Activated CD4-positive, alpha-beta memory T cell treated with anti-CD3 and anti-CD28 coated beads for 36 hours (primary cell): ENCODE measurements at regions of chr16 and their contacts with region 1.

Region 1: DNA sequence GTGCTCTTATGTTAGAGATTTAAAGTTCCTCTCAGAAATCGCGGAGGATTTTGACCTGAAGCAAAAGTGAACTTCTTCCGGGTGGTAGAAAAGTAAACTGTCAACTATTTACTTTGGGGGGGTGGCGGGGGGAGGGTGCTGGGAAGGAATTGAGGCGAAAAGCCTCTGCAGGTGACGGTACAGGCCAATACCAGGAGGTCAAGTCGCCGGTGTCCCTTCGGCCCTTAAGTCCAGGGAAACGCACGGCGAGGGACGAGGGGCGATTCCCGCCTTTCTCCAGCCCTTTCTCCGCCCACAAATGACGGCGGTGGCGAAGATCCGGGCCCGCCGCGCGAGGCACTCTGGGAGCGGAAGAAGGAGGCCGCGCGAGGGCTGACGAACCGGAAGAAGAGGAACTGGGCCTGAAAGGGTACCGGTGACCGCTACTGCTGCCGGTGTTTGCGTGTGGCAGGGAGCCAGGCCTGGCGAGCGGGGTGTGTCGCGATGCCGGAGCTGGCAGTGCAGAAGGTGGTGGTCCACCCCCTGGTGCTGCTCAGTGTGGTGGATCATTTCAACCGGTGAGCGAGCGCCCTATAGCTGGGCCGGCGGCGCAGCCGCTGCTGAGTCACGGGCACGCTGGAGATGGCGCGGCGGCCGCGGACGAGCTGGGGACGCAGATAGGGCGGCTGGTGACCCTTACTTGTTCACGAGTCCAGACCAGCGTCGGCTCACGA is at the start of gene PSMD7:
- DNase-seq: peak; percentile 94
- H3K4me3 Mint-ChIP-seq: peak within 1 kb of the TSS; percentile 87
- H3K27ac Mint-ChIP-seq: peak within 1 kb of the TSS; percentile 94
- H3K4me1 Mint-ChIP-seq: peaks cover 31% of the 10 kb centered on the region
- H3K27me3 Mint-ChIP-seq: no peaks in the 10 kb centered on the region
- total RNA-seq, gene PSMD7: 119 to 123 TPM

Region 2: DNA sequence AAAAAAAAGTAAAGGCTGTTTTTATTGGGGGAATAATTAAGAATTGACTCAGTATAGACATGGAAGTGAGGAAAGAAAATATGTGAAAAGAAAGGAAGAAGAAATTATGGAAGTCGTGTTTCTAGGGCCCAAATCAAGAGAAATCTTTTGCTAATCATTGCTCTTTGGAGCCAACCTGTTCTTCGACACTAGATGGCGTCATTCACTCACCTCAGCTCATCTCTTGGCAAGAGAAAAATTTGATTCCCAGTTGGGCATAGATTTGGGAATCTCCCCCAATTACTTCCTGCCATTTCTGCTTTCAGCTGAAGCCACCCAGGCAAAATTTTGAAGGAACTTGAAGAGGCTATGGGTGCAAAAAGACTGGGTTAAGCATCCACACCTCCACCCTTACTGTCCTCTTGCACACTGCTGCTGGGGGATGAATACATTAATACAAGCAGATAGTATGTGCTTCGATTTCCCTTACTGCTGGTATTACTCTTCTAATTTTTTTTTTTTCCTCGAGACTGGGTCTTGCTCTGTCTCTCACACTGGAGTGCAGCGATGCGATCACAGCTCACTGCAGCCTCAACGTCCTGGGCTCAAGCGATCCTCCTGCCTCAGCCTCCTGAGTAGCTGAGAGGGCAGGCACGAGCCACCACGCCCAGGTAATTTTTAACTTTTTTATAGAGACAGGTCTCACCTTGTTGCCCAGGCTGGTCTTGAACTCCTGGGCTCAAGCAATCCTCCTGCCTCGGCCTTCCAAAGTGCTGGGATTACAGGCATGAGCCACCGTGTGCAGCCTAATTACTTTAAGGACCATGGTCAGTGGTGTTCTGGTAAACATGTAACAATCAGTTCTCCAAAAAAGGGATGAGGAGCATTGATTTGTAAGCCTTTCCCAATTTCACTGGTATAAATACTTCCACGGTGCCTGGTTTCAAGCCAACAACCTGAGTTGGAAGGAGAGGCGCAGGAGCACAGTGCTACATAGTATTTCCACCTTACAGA is 13.5 kb after region 1 on chr16:
- CTCF ChIA-PET with region 1: interaction called, 29 read pairs
- POLR2A ChIA-PET with region 1: interaction called, 7 read pairs
- intact Hi-C with region 1: no loop called
- DNase-seq: no peak
- H3K4me3 Mint-ChIP-seq: no peak overlapping the region
- H3K27ac Mint-ChIP-seq: no peak overlapping the region
- H3K4me1 Mint-ChIP-seq: peaks cover 7% of the 10 kb centered on the region
- H3K27me3 Mint-ChIP-seq: no peaks in the 10 kb centered on the region

Region 3: GRCh38 chr16:74372953-74373846 is 76.6 kb after region 1 on chr16:
- CTCF ChIA-PET with region 1: no interaction called
- POLR2A ChIA-PET with region 1: interaction called, 3 read pairs
- intact Hi-C with region 1: loop called (anchors 1 kb)
- DNase-seq: no peak
- H3K4me3 Mint-ChIP-seq: no peak overlapping the region
- H3K27ac Mint-ChIP-seq: no peak overlapping the region
- H3K4me1 Mint-ChIP-seq: no peaks in the 10 kb centered on the region
- H3K27me3 Mint-ChIP-seq: no peaks in the 10 kb centered on the region

Region 4: DNA sequence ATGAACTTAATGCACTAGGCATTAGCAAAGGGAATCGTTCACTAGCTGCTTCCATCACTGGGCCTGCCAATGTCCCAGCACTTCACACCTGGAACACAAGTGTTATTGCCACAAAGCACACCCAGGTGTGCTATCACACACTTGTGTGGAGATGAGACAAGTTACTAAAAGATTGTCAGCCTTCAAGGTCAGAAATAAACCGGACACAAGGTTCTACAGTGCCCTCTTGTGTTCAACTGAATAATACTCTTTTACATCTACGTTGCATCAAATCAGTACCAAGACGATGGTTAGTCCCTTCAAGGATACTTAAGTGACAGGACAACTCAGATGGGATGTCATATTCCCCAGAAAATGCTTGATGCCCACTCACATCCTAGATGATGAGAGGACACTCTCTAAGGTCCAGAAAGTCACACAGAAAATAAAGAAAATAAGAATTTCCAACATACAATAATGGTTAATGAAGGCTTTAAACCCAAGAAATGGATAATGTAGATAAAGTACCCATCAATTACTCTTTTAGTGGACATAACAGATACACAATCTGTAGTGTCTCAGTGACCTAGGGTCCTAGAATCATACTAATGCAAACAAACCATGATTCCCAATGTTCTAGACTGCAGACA is 326.7 kb after region 1 on chr16:
- CTCF ChIA-PET with region 1: no interaction called
- POLR2A ChIA-PET with region 1: no interaction called
- intact Hi-C with region 1: loop called (anchors 2 kb)
- DNase-seq: no peak
- H3K4me3 Mint-ChIP-seq: no peak overlapping the region
- H3K27ac Mint-ChIP-seq: no peak overlapping the region
- H3K4me1 Mint-ChIP-seq: peaks cover 38% of the 10 kb centered on the region
- H3K27me3 Mint-ChIP-seq: no peaks in the 10 kb centered on the region

Region 5: DNA sequence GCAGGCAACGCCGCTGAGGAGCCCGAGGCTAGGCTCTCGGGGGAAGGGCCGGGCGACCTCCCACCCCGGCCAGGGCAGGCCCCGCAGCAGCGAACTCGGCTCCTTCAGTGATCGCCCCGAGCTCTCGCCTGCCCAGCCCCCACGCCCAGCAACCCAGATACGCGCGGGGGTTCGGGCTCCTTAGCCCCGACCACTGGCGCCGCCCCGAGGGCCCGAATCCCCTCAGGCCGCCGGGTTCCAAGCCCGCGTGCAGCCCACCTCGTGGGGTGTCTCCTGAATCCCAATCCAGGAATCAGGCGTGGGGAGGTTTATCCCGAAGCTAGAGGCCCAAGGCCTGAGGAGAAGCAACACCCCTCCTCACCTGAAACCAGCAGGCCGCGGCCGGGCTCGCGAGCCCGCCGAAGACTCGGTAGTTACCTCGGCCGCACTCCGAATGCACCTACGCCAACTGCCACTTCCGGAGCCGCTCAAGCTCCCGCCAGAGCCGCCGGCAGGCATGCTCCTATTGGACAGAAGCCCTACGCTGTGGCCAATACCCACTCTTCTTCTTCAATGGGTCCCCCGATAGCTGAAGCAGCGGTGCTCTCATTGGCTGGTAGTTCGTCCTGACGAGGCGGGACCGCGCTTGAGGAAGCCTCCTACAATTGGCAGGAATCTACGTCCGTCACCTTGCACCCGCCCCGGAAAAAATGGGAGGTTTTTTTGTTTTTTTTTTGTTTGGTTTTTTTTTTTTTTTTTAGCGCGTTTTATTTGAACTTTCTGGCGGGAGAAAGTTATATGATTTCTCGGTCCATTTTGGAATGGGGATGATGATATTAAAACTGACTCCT is 370.1 kb after region 1 on chr16 and contains the start of gene RFWD3:
- CTCF ChIA-PET with region 1: no interaction called
- POLR2A ChIA-PET with region 1: interaction called, 4 read pairs
- intact Hi-C with region 1: loop called (anchors 1 kb)
- DNase-seq: peak; percentile 98
- H3K4me3 Mint-ChIP-seq: peak within 1 kb of the TSS; percentile 85
- H3K27ac Mint-ChIP-seq: peak within 1 kb of the TSS; percentile 91
- H3K4me1 Mint-ChIP-seq: peaks cover 39% of the 10 kb centered on the region
- H3K27me3 Mint-ChIP-seq: no peaks in the 10 kb centered on the region
- total RNA-seq, gene RFWD3: 95.3 to 109 TPM

Region 6: DNA sequence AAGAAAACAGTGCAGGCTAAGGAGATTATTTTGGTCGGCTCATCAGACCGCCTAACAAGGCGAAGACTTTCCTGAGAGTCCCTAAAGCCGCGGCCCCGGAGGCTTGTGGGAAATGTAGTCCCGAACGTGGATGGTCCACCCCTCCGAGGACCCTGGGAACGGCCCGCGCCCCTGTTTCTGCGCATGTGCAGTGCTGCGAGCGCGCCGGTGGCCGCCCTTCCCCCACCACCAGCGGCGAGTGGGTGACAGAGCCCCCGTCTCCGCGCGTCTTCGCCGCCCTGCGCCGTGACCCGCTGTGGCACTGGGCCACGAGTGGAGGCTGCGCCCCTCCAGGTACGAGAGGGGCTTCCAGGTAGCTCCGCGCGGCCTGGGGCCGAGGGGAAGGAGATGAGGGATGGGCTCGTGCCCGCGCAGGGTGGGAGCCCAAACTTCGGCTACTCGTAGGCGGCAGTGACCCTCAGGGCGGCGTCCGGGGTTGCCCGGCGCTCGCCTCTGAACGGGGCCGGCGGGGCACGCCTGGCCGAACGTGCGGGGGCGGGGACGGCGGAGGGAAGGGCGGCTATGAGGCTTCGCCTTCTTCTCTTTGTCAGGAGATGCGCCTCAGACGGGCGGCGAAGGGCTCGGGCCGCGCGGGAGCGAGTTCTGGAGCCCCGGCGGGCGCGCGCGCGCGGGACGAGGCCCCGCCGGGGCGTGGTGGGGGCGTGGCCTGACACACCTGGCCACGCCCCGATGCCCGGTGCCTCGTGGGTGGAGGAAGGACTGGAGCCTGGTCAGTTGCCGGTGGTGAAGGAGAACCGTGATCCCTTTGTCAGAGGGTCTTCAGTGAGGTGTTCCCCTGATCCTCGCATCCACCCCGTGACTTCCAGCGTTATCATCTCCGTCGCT is 852.0 kb after region 1 on chr16 and contains the start of gene ZFP1:
- CTCF ChIA-PET with region 1: no interaction called
- POLR2A ChIA-PET with region 1: no interaction called
- intact Hi-C with region 1: loop called (anchors 5 kb)
- DNase-seq: peak; percentile 96
- H3K4me3 Mint-ChIP-seq: peak within 1 kb of the TSS; percentile 87
- H3K27ac Mint-ChIP-seq: peak within 1 kb of the TSS; percentile 76
- H3K4me1 Mint-ChIP-seq: peaks cover 29% of the 10 kb centered on the region
- H3K27me3 Mint-ChIP-seq: no peaks in the 10 kb centered on the region
- total RNA-seq, gene ZFP1: 17.2 to 19.4 TPM